ENCODE measurements at regions of chr3 and their contacts with region 1.

Region 1: GRCh38 chr3:55329849-55330248 is 157.3 kb downstream of the WNT5A start:
- DNase-seq: no peak
- H3K4me3 ChIP-seq: no peak overlapping the region
- H3K4me3 Mint-ChIP-seq: no peak overlapping the region
- H3K27ac ChIP-seq: no peak overlapping the region
- H3K27ac Mint-ChIP-seq: no peak overlapping the region
- H3K4me1 ChIP-seq: no peaks in the 10 kb centered on the region
- H3K4me1 Mint-ChIP-seq: no peaks in the 10 kb centered on the region
- H3K27me3 ChIP-seq: no peaks in the 10 kb centered on the region
- H3K27me3 Mint-ChIP-seq: no peaks in the 10 kb centered on the region
- CTCF ChIP-seq: no peak

Region 2: DNA sequence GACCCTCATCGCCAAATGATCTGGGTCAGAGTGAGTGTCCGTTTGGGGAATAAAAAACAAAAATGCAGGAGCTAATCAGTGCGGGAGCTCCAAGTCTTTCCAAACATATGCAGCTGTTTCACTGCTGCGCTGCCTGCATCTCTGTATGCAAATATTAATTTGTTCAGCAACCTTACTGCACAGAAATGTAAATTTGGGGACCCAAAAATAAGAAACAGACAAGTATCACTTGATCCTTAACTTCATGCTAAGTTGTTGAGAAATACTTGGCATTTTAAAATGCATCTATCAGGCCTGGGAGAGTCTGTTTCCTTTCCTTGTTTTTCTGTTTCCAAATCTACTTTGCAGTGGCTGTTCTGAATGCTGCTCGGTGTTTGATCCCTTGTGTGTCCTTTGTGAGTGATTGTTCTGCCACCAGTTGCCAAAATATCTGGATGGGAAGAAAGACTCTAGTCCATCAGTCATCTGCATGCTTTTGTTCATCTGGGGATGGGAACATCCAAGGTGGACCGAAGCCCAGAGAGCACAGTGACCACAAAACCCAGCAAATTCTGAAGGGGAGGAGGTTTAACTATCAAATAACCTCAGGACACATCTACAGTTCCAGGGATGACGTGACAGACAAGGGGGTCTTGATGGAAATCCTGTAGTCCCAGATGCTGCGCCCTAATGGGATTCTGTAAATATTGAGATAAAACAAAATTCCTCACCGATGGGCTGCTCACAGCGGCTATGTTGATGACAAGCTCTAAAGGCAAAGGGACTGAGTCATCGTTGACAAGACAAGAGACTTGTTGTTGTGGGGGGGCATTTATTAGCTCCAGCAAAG is 356.8 kb after region 1 on chr3:
- intact Hi-C with region 1: loop called in 1 of 2 experiments (anchors 10 kb)
- DNase-seq: no peak
- H3K4me3 ChIP-seq: no peak overlapping the region
- H3K4me3 Mint-ChIP-seq: no peak overlapping the region
- H3K27ac ChIP-seq: no peak overlapping the region
- H3K27ac Mint-ChIP-seq: no peak overlapping the region
- H3K4me1 ChIP-seq: peaks cover 0 to 7% of the 10 kb centered on the region in 2 donors
- H3K4me1 Mint-ChIP-seq: peaks cover 6% of the 10 kb centered on the region
- H3K27me3 ChIP-seq: no peaks in the 10 kb centered on the region
- H3K27me3 Mint-ChIP-seq: peaks cover 0 to 4% (median 2%) of the 10 kb centered on the region in 3 donors
- CTCF ChIP-seq: no peak

Measured in CD14-positive monocyte (primary cell).